Posterior cingulate gyrus (tissue), 11 donors: ENCODE measurements at regions of chr6 and their contacts with region 1.

Region 1: DNA sequence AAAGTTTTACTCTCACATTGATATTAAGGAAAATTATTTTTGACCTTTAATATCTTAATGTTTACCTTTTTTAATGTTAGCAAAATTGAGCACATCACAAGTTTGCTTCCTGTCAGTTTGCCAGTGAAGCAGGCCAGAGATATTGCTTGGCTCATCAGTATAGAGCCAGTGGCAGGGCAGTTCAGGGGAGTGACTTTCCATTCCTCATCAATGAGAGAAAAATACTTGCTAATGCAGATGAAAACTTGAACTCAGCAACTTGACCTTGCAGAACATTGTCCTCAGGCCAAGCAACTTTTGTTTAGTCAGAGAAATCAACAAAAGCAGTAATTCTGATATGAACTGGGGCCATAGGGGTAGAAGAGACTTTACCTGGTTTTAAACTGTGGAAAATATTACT is 6.9 kb downstream of the TAB2 start:
- DNase-seq: no peak

Region 2: GRCh38 chr6:147793871-147794643 is 1530.4 kb before region 1 on chr6:
- intact Hi-C with region 1: no loop called
- DNase-seq: no peak

Region 3: DNA sequence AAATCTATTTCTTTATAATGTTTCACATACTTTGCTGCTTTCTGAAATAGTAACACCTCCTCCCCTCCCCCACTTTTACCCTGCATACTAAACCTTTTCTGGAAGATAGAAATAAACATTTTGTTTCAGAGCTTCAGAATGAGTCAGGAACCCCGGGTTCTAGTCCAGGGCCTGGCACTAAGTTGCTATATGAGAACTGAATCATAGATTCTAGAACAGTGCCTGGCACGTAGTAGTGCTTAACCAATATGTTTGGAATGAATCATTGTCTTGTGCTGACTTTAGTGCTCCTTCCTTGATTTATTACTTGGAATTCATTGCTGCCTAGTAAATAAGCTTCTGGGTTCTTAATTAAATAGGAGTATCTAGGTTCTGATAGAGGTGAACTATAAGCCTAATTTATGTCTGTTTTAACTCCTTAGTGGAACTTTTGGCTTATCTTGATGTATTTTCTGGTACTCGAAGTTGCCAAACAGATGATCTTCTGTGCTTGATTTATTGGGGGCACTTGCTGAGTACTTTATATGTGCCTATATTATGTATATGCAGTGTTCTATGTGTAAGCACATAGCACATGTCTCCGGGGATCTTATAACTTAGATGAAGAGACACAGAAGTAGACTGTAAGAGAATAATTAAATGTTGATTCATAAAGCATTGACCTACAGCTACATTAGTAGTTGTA is 11.6 kb after region 1 on chr6:
- intact Hi-C with region 1: loop called (anchors 1 kb)
- DNase-seq: no peak